ENCODE measurements at regions of chr11 and their contacts with region 1.

Region 1: DNA sequence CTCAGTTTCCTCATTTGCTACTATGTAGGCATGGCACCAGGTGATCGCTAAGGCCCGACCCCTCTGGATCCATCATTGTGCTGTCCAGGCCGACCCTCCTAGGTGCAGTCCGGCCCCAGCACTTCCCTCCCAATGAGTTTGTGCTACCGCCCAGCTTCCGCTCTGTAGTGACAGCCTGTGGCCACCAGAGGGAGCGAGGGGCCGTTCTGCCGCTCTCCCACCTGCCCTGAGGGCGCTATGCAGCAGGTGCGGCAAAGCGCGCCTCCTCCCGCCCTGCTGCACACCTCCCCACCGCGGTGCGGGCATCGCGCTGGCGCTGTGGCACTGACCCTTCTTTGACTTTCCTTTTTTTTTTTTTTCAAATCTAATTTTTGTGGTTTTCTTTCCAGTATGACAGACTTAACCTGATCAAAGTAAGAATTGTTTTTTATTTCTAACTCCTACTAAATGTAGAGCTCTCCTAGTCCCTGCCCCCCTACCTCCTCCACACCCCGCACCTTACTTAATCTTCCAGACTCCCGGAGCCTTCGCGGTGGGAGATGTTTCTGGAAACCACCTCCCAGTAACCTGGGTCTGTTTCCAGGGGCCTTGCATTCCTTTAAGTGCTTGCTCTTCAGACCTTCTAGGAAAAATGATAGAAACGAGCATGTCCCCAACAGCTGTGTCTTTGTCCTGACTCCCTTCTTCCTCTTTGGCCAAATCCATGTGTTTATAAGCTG is 73.7 kb downstream of the SCN3B start:
- DNase-seq: no peak
- H3K4me3 ChIP-seq: no peak overlapping the region
- H3K27ac ChIP-seq: no peak overlapping the region
- H3K27me3 ChIP-seq: peaks cover 4% of the 10 kb centered on the region
- CTCF ChIP-seq: peak; percentile 95

Region 2: DNA sequence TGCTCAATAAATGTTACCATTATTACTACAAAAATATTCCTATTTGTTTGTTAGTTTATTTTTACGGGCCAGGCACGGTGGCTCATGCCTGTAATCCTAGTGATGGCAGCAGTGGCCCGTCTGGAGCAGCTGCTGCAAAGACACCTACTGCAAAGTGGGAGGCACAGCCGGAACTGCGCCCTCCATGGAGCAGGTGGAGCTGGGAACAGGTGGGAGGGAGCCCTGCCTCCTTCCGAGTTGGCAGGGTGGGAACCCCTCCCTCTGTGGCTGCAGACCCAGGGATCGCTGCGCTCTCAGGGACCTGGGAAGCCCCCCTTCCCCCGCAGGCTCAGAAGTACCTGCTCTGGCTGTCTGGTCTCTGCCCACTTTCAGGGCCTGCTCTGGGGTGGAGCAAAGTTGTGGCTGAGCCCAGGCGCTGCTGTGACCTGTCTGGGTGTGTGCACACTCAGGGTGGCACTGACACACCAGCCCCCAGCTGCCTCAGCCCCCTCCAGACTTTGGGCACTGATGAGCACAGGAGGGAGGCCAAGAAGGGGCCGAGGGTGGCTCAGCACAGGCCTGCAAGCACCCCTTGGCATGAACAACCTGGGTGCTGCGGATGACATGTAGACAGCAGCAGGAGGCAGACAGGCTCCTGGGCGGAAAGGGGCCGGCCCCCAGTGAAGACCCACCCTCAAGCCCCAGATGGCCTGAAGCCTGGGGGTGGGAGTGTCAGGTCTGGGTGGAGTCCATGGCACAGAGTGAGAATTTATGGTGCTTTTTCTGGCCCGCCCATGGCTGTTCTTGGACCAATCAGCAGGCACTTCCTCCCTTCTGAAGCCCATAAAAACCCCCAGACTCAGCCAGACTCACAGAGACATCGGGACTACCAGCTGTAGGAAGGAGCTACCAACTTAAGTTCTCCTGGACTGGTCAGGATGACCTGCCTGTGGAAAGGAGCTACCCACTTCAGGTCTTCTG is 281.9 kb before region 1 on chr11:
- CTCF ChIA-PET with region 1: no interaction called
- POLR2A ChIA-PET with region 1: no interaction called
- DNase-seq: no peak
- H3K4me3 ChIP-seq: no peak overlapping the region
- H3K27ac ChIP-seq: no peak overlapping the region
- H3K27me3 ChIP-seq: peaks cover 10% of the 10 kb centered on the region
- CTCF ChIP-seq: no peak

Region 3: GRCh38 chr11:123511037-123511870 is 69.5 kb before region 1 on chr11:
- CTCF ChIA-PET with region 1: interaction called, 42 read pairs
- POLR2A ChIA-PET with region 1: no interaction called
- DNase-seq: peak; percentile 80
- H3K4me3 ChIP-seq: no peak overlapping the region
- H3K27ac ChIP-seq: no peak overlapping the region
- H3K27me3 ChIP-seq: no peaks in the 10 kb centered on the region
- CTCF ChIP-seq: peak; percentile 88

Region 4: GRCh38 chr11:123519055-123519796 is 61.5 kb before region 1 on chr11:
- CTCF ChIA-PET with region 1: interaction called, 17 read pairs
- POLR2A ChIA-PET with region 1: no interaction called
- DNase-seq: no peak
- H3K4me3 ChIP-seq: no peak overlapping the region
- H3K27ac ChIP-seq: no peak overlapping the region
- H3K27me3 ChIP-seq: no peaks in the 10 kb centered on the region
- CTCF ChIP-seq: no peak

Region 5: DNA sequence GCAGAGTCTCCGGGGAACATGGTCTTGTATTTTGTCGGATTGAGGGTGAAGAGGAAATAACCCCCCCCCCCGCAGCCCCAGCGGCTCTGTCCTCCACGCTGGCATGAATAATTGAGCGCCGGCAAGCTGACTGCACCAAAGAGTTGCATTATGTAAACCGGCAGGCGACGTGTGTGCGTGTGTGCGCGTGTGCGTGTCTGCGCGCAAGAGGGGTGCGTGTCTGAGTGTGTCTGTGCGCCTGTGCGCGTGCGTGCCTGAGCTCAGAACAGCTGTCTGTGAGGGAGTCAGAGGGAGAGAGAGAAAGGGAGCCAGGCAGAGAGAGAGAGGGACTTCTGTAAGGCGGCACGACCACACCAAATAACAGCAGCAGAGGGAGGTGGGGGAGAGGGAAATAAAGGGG is 20.7 kb before region 1 on chr11:
- CTCF ChIA-PET with region 1: interaction called, 47 read pairs
- POLR2A ChIA-PET with region 1: no interaction called
- DNase-seq: peak; percentile 41
- H3K4me3 ChIP-seq: peak overlapping the region; percentile 52
- H3K27ac ChIP-seq: peak overlapping the region; percentile 39
- H3K27me3 ChIP-seq: peaks cover 3% of the 10 kb centered on the region
- CTCF ChIP-seq: no peak

Region 6: GRCh38 chr11:123594188-123594901 is 13.6 kb after region 1 on chr11:
- CTCF ChIA-PET with region 1: interaction called, 13 read pairs
- POLR2A ChIA-PET with region 1: no interaction called
- DNase-seq: no peak
- H3K4me3 ChIP-seq: no peak overlapping the region
- H3K27ac ChIP-seq: no peak overlapping the region
- H3K27me3 ChIP-seq: no peaks in the 10 kb centered on the region
- CTCF ChIP-seq: no peak

Region 7: DNA sequence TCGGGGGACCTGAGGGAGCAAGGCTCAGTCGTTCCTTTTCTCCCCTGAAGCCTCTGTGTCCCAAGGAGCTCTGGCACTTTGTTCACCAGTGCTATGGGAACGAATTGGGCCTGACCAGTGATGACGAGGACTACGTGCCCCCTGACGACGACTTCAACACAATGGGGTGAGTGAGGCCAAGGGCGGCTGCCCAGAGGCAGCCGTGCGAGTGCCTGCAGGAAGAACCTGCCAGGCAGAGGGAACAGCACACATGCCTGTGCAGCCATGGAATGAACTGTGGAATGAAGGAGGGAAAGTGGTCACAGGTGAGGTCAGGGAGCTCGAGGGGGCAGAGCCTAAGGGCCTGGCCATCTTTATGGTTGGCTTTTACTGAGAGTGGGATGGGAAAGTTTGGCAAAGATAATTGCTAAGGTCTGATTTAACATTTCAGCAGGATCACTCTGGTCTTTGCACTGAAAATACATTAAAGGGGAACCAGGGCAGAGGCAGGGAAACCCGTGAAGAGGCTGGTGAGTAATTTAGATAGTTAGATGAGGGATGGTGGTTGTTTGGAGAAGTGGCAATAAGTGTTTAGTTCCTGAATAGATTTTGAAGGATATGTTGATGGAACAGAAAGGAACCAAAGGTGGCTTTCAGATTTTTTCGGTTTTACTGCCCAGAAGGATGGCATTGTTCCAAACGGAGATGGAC is 22.8 kb after region 1 on chr11:
- CTCF ChIA-PET with region 1: interaction called, 11 read pairs
- POLR2A ChIA-PET with region 1: no interaction called
- DNase-seq: no peak
- H3K4me3 ChIP-seq: no peak overlapping the region
- H3K27ac ChIP-seq: no peak overlapping the region
- H3K27me3 ChIP-seq: no peaks in the 10 kb centered on the region
- CTCF ChIP-seq: no peak

Region 8: DNA sequence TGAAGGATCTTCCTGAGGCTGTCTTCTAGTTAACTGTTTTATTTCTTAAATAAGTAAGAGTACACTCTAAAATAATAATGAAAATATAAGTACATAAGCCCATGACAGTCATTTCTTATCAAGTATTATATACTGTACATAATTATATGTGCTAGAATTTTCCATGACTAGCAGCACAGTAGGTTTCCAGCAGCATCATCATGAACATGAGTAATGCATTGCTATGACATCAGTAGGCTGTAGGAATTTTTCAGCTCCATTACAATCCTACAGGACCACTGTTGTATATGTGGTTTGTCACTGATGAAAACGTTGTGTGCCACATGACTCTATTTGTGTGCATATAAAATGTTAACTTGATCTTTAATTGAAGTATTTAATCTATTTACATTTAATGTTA is 138.7 kb after region 1 on chr11:
- CTCF ChIA-PET with region 1: interaction called, 10 read pairs
- POLR2A ChIA-PET with region 1: no interaction called
- DNase-seq: no peak
- H3K4me3 ChIP-seq: no peak overlapping the region
- H3K27ac ChIP-seq: no peak overlapping the region
- H3K27me3 ChIP-seq: peaks cover 3% of the 10 kb centered on the region
- CTCF ChIP-seq: no peak